Endothelial cell of umbilical vein (primary cell): ENCODE measurements at regions of chr9 and their contacts with region 1.

Region 1: DNA sequence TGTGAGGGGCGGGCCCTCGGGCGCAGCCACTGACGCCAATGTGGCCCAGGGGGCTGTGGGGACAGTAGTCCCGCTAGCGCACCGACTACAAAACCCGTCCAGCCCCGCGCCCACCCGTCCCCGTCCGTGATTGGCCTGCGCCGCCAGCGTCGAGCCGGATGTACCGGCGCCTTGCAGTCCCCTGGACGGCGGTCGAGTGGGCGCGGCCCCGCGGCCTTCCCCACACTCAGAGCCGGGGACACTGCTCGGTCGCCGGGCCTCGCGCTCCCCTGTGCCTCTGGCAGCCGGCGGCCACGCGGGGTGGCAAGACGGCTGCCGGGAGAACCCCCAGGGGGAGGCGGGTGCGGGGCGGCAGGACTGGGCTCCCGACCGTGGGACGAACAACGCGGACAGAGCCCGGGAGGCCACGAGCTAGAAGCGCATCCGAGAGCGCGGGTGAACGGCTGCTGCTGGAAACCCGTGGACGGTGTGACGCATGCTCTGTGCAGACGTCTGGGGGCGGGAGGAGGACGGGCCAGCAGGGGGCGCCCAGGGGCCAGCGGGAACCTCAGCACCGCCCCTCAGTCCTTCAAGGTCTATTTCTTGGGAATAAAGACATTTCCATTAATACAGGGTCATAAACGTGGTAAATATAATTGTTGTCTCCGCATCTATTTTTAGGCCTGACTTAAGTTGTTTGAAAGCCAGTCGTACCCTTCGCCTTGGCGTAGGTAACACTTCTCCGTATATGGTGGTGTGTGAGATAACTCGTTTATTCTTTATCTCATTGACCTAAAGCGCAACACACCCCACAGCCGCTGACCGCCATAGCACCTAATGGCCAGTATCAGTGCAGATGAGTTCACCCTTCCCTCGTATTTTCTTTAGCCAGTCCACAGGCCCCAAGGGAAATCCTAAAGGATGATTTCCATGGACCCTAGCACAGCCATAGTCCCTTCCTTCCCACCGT is 629 bp upstream of the BICD2 start:
- DNase-seq: peak; percentile 98
- H3K4me3 ChIP-seq: peak overlapping the region; percentile 35 to 99 (median 66)
- H3K27ac ChIP-seq: peak overlapping the region; percentile 95
- H3K4me1 ChIP-seq: peaks cover 16% of the 10 kb centered on the region
- H3K27me3 ChIP-seq: no peaks in the 10 kb centered on the region
- CTCF ChIP-seq: peak; percentile 98 to 99
- POLR2A ChIP-seq: peak; percentile 64

Region 2: GRCh38 chr9:92669890-92670708 is 95.2 kb before region 1 on chr9 and contains the start of gene IPPK:
- CTCF ChIA-PET with region 1: no interaction called
- POLR2A ChIA-PET with region 1: interaction called, 6 read pairs
- dilution Hi-C with region 1: no loop called
- intact Hi-C with region 1: loop called (anchors 1 kb)
- DNase-seq: peak; percentile 98
- H3K4me3 ChIP-seq: peak within 1 kb of the TSS; percentile 50 to 83 (median 77)
- H3K27ac ChIP-seq: peak within 1 kb of the TSS; percentile 97
- H3K4me1 ChIP-seq: peaks cover 16% of the 10 kb centered on the region
- H3K27me3 ChIP-seq: no peaks in the 10 kb centered on the region
- CTCF ChIP-seq: no peak
- POLR2A ChIP-seq: peak; percentile 88
- total RNA-seq, gene IPPK: 12.5 and 14.0 TPM in 2 replicates

Region 3: DNA sequence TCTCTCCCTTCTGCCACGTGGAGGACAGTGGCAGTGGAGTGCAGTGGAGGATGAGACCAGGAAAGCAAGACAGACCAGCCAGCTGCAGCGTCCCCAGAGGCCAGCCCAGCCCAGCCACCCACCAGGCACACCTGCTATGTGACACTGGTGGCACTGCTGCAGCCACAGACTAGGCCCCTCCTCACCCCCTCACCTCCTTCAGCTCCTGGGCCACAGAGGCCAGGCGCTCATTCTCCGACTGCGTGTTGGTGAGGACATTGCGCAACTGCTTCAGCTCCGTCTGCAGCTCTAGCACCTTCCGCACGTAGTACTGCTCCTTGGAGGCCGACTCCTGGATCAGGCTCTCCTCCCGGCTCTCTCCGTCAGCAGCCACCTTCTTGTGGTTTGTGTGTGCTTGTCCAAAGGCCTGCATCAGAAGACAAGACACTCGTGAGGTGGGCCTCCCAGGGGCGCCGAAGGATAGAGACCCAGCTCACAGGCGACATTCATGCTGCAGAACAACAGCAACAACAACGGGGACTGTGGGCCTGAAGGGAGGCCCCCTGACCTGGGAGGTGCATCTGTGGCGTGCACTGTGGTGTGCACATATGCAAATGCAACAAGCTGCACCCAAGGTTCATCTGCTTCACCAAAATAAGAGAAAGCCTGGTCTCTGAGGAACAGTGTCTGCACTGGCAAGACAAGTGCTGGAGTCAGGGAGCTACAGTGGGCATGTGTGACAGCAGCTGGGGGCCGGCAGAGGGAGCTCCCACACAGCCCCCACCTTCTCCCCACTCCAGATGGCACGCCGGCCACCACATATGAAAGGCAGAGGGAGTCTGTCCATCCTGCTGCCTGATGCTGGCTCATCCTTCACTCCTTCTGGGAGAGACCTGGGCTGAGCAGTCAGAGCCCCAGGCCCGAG is 36.2 kb before region 1 on chr9:
- CTCF ChIA-PET with region 1: interaction called, 5 read pairs
- POLR2A ChIA-PET with region 1: no interaction called
- dilution Hi-C with region 1: no loop called
- intact Hi-C with region 1: loop called (anchors 1 kb)
- DNase-seq: no peak
- H3K4me3 ChIP-seq: no peak overlapping the region
- H3K27ac ChIP-seq: no peak overlapping the region
- H3K4me1 ChIP-seq: peaks cover 11% of the 10 kb centered on the region
- H3K27me3 ChIP-seq: no peaks in the 10 kb centered on the region
- CTCF ChIP-seq: peak; percentile 14 to 44
- POLR2A ChIP-seq: no peak

Region 4: DNA sequence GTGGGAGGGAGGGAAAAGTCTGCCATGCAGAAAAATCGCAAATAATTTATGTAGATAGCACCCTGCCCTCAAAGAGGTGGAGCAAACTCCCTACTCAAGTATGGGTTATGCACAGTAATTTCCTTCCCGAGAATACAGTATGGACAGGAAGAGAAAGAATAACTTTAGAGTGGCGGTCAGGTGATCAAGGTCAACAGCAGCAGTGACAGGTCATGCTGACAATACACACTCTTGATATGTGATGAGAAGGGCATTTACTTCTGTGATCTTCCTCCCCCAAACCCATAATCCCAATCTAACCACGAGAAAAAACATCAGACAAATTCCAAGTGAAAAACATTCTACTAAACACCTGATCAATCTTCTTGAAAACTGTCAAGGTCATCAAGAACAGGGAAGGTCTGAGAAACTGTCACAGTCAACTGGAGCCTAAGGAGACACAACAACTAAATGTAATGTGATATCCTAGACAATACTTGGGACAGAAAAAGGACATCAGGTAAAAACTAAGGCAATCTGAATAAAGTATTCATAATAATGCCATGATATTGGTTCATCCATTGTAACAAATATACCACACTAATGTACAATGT is 12.4 kb before region 1 on chr9:
- CTCF ChIA-PET with region 1: no interaction called
- POLR2A ChIA-PET with region 1: interaction called, 6 read pairs
- dilution Hi-C with region 1: no loop called
- intact Hi-C with region 1: loop called (anchors 1 kb)
- DNase-seq: peak; percentile 29
- H3K4me3 ChIP-seq: no peak overlapping the region
- H3K27ac ChIP-seq: peak overlapping the region; percentile 20
- H3K4me1 ChIP-seq: peaks cover 14% of the 10 kb centered on the region
- H3K27me3 ChIP-seq: no peaks in the 10 kb centered on the region
- CTCF ChIP-seq: no peak
- POLR2A ChIP-seq: no peak